Heart left ventricle (tissue), 16 donors: ENCODE measurements at regions of chr20 and their contacts with region 1.

Region 1: DNA sequence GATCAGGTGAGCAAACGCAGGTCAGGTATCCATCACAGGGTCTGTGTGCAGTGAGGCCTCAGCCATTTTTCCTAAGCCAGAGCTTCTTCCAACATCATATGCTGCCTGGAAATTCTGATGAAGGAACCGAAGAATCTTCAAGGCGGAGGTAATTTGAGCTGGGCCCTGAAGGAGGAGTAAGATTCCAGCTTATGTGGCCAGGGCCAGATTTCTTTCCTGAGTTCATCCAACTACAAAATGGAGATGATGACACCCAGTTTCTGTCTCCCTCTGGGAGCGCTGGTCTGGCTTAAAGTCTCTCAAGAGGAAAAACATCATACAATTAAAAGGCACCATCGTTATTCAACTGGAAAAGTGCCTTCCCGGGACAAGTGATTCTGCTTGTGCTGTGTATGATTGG is 6.9 kb upstream of the MANBAL start:
- DNase-seq: no peak
- ATAC-seq: no peak
- H3K4me3 ChIP-seq: no peak overlapping the region
- H3K27ac ChIP-seq: peak overlapping the region in 1 of 12 donors; percentile 72
- H3K4me1 ChIP-seq: peaks cover 0 to 1% (median 0%) of the 10 kb centered on the region in 12 donors
- H3K27me3 ChIP-seq: peaks cover 0 to 5% (median 0%) of the 10 kb centered on the region in 9 donors
- CTCF ChIP-seq: peak in 4 of 12 donors; percentile 11 to 27 (median 18)
- POLR2A ChIP-seq: no peak

Region 2: GRCh38 chr20:37336369-37337207 is 54.0 kb after region 1 on chr20:
- intact Hi-C with region 1: loop called in 1 of 10 experiments (anchors 10 kb)
- DNase-seq: peak; percentile 77 to 83 (median 79)
- ATAC-seq: peak; percentile 22 to 81 (median 72)
- H3K4me3 ChIP-seq: peak overlapping the region in 3 of 12 donors; percentile 8 to 13 (median 12)
- H3K27ac ChIP-seq: peak overlapping the region in 11 of 12 donors; percentile 20 to 78 (median 50)
- H3K4me1 ChIP-seq: peaks cover 0 to 35% (median 7%) of the 10 kb centered on the region in 12 donors
- H3K27me3 ChIP-seq: no peaks in the 10 kb centered on the region
- CTCF ChIP-seq: no peak
- POLR2A ChIP-seq: no peak